Activated naive CD4-positive, alpha-beta T cell treated with anti-CD3 and anti-CD28 coated beads for 36 hours (primary cell): ENCODE measurements at regions of chr11 and their contacts with region 1.

Region 1: GRCh38 chr11:7538031-7538430 is 24.2 kb downstream of the PPFIBP2 start:
- DNase-seq: peak; percentile 65
- H3K4me3 Mint-ChIP-seq: no peak overlapping the region
- H3K27ac Mint-ChIP-seq: peak overlapping the region; percentile 44
- H3K4me1 Mint-ChIP-seq: peaks cover 73% of the 10 kb centered on the region
- H3K27me3 Mint-ChIP-seq: no peaks in the 10 kb centered on the region

Region 2: GRCh38 chr11:7422544-7423331 is 115.3 kb before region 1 on chr11:
- CTCF ChIA-PET with region 1: no interaction called
- intact Hi-C with region 1: no loop called
- DNase-seq: peak; percentile 19
- H3K4me3 Mint-ChIP-seq: no peak overlapping the region
- H3K27ac Mint-ChIP-seq: no peak overlapping the region
- H3K4me1 Mint-ChIP-seq: peaks cover 13% of the 10 kb centered on the region
- H3K27me3 Mint-ChIP-seq: no peaks in the 10 kb centered on the region

Region 3: GRCh38 chr11:7520981-7521487 is 17.0 kb before region 1 on chr11:
- CTCF ChIA-PET with region 1: interaction called, 3 read pairs
- intact Hi-C with region 1: loop called (anchors 2 kb)
- DNase-seq: no peak
- H3K4me3 Mint-ChIP-seq: no peak overlapping the region
- H3K27ac Mint-ChIP-seq: no peak overlapping the region
- H3K4me1 Mint-ChIP-seq: peaks cover 45% of the 10 kb centered on the region
- H3K27me3 Mint-ChIP-seq: no peaks in the 10 kb centered on the region